ENCODE measurements at regions of chr19 and their contacts with region 1.

Region 1: DNA sequence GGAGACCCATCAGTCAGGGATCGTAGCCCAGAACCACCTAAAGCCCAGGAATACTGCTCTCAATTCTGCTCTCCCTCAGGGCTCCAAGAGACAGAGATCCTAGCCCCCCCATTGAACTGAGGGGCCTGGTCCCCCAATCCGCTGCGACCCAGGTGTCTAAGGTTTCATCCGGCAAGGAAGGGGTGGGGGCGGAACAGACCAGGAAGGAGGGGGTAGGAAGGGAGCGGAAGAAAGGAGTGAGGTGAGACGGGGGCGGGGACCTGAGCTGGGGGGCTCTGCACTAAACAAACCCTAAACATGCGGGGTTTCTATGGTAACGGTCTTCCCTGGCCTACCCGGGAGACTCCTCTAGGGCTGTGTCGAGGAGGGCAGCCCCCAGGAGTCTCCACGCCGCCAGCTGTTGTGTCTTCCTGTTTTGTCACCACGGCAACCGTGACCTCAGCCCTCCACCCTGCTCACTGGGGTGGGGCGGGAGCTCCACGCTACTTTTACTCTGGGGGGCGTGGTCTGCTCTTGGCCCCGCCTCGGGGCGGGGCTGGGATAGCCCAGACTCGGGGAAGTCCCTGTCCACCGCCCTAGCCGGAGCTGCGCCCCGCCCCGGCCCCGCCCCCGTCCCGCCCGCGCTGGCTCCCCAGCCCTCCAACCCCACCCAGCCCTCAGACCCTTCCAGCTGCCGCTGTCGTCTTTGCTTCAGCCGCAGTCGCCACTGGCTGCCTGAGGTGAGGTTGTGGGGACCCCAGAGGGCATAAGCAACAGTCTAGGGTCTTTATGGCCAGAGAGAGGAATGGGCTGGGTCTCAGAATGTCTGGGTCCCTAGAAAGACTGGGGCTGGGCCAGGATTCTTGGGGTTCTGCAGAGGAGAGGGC is at the start of gene MYADM:
- DNase-seq: peak; percentile 100
- H3K4me3 ChIP-seq: peak within 1 kb of the TSS; percentile 85 to 90
- H3K4me3 Mint-ChIP-seq: peak within 1 kb of the TSS; percentile 95 to 99 (median 98)
- H3K27ac ChIP-seq: peak within 1 kb of the TSS; percentile 100
- H3K27ac Mint-ChIP-seq: peak within 1 kb of the TSS; percentile 99 to 100 (median 100)
- H3K4me1 ChIP-seq: peaks cover 30% of the 10 kb centered on the region
- H3K4me1 Mint-ChIP-seq: peaks cover 20 to 60% (median 28%) of the 10 kb centered on the region in 4 donors
- H3K27me3 ChIP-seq: no peaks in the 10 kb centered on the region
- H3K27me3 Mint-ChIP-seq: no peaks in the 10 kb centered on the region
- total RNA-seq, gene MYADM: 42.1 to 45.8 TPM

Region 2: DNA sequence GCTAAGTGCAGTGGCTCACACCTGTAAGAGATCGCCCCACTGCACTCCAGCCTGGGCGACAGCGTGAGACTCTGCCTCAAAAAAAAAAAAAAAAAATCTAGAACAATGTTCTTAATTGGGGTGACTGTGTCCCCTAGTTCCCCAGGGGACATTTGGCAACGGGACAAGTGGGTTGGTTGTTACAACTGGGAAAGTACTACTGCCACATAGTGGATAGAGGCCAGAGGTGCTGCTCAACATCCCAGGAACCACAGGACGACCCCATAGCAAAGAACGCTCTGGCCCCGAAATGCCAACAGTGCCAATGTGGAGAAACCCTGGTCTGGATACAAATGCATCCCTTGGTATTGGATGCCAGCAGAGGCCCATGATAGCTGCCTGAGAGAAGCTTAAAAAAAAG is 55.1 kb before region 1 on chr19:
- CTCF ChIA-PET with region 1: no interaction called
- POLR2A ChIA-PET with region 1: no interaction called
- intact Hi-C with region 1: no loop called
- DNase-seq: no peak
- H3K4me3 ChIP-seq: no peak overlapping the region
- H3K4me3 Mint-ChIP-seq: peak overlapping the region in 1 of 8 donors; percentile 43
- H3K27ac ChIP-seq: no peak overlapping the region
- H3K27ac Mint-ChIP-seq: no peak overlapping the region
- H3K4me1 ChIP-seq: no peaks in the 10 kb centered on the region
- H3K4me1 Mint-ChIP-seq: no peaks in the 10 kb centered on the region
- H3K27me3 ChIP-seq: no peaks in the 10 kb centered on the region
- H3K27me3 Mint-ChIP-seq: no peaks in the 10 kb centered on the region

Region 3: GRCh38 chr19:53849237-53849676 is 18.2 kb before region 1 on chr19:
- CTCF ChIA-PET with region 1: interaction called, 7 read pairs
- POLR2A ChIA-PET with region 1: interaction called, 5 read pairs
- intact Hi-C with region 1: loop called (anchors 1 kb)
- DNase-seq: no peak
- H3K4me3 ChIP-seq: no peak overlapping the region
- H3K4me3 Mint-ChIP-seq: peak overlapping the region in 1 of 8 donors; percentile 23
- H3K27ac ChIP-seq: no peak overlapping the region
- H3K27ac Mint-ChIP-seq: no peak overlapping the region
- H3K4me1 ChIP-seq: peaks cover 7% of the 10 kb centered on the region
- H3K4me1 Mint-ChIP-seq: peaks cover 6 to 12% (median 9%) of the 10 kb centered on the region in 4 donors
- H3K27me3 ChIP-seq: no peaks in the 10 kb centered on the region
- H3K27me3 Mint-ChIP-seq: peaks cover 24% of the 10 kb centered on the region in 2 donors

Region 4: DNA sequence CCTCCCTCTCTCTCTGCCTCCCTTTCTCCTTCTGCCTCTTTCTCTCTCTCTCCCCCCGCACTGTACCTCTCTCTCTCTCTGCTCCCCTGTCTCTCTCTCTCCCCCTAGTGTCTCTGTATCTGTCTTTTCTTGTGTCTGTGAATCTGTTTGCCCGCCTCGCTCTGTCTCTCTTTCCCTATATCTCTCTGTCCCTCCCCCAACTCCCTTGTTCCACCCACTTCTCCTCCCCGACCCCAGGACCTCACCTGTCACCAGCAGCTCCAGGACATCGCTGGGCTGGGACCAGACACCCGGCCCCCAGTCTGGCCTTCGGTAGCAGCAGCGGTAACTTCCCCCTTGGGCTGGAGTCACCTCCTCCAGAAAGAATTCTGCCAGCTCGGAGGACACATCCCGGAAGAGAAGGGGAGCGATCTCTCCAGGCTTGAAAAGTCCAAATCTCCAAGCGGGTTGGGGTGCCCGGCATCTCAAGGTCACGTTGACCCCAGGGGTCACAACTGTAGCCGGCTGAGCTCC is 229.2 kb after region 1 on chr19:
- CTCF ChIA-PET with region 1: no interaction called
- POLR2A ChIA-PET with region 1: interaction called, 3 read pairs
- intact Hi-C with region 1: loop called (anchors 1 kb)
- DNase-seq: peak in 4 of 5 donors; percentile 30 to 50 (median 43)
- H3K4me3 ChIP-seq: no peak overlapping the region
- H3K4me3 Mint-ChIP-seq: peak overlapping the region; percentile 29 to 87 (median 62)
- H3K27ac ChIP-seq: no peak overlapping the region
- H3K27ac Mint-ChIP-seq: peak overlapping the region; percentile 45 to 91 (median 82)
- H3K4me1 ChIP-seq: peaks cover 13% of the 10 kb centered on the region
- H3K4me1 Mint-ChIP-seq: peaks cover 8 to 20% (median 10%) of the 10 kb centered on the region in 4 donors
- H3K27me3 ChIP-seq: no peaks in the 10 kb centered on the region
- H3K27me3 Mint-ChIP-seq: peaks cover 6 to 7% of the 10 kb centered on the region in 2 donors

Region 5: DNA sequence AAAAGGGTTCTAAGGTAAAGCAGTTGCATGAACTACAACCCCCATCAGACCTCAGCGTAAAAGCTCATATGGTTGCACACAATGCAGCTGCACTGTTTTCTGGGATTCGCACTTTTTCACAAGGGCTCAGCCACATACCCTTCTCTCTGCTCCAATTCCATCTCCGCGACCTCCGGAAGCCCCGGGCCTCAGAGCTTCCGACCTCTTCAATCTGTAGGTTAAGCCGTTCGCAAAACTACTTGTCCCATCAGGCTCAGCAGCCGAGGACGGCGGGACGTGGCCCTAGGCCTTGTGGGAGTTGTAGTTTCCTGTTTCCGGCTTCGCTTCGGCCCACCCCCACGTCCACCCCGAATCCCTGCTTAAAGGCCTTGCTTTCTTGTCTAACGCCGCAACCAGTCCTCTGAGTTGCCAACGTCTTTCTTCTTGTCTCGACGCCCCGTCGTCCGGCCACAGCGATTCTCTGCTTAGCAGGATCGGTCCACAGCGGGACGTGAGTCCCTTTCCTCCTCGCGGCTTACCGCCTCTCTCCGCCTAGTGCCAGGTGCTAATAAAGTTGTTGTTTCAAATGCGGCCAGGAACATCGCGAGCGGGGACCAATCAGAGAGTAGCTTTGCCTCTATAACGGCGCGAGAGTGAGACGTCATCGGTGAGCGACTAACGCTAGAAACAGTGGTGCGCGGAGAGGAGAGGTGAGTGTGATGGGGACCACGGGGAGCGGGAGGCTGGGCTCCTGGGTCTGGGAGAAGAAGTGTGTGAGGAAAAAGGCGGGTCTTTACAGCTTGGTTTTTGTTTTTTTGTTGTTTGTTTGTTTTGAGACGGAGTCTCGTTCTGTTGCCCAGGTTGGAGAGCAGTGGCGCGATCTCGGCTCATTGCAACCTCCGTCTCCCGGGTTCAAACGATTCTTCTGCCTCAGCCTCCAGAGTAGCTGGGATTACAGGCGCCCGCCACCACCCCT is 247.9 kb after region 1 on chr19 and contains the starts of genes PRPF31 and TFPT:
- CTCF ChIA-PET with region 1: no interaction called
- POLR2A ChIA-PET with region 1: interaction called, 11 read pairs
- intact Hi-C with region 1: no loop called
- DNase-seq: peak; percentile 97 to 98 (median 97)
- H3K4me3 ChIP-seq: peak within 1 kb of the TSS; percentile 80 to 81
- H3K4me3 Mint-ChIP-seq: peak within 1 kb of the TSS; percentile 86 to 99 (median 95)
- H3K27ac ChIP-seq: peak within 1 kb of the TSS; percentile 75
- H3K27ac Mint-ChIP-seq: peak within 1 kb of the TSS; percentile 91 to 97 (median 95)
- H3K4me1 ChIP-seq: peaks cover 27% of the 10 kb centered on the region
- H3K4me1 Mint-ChIP-seq: peaks cover 22 to 44% (median 28%) of the 10 kb centered on the region in 4 donors
- H3K27me3 ChIP-seq: no peaks in the 10 kb centered on the region
- H3K27me3 Mint-ChIP-seq: peaks cover 0 to 2% of the 10 kb centered on the region in 2 donors
- total RNA-seq, gene PRPF31: 77.6 to 80.0 TPM
- total RNA-seq, gene TFPT: 17.2 to 19.0 TPM

Region 6: DNA sequence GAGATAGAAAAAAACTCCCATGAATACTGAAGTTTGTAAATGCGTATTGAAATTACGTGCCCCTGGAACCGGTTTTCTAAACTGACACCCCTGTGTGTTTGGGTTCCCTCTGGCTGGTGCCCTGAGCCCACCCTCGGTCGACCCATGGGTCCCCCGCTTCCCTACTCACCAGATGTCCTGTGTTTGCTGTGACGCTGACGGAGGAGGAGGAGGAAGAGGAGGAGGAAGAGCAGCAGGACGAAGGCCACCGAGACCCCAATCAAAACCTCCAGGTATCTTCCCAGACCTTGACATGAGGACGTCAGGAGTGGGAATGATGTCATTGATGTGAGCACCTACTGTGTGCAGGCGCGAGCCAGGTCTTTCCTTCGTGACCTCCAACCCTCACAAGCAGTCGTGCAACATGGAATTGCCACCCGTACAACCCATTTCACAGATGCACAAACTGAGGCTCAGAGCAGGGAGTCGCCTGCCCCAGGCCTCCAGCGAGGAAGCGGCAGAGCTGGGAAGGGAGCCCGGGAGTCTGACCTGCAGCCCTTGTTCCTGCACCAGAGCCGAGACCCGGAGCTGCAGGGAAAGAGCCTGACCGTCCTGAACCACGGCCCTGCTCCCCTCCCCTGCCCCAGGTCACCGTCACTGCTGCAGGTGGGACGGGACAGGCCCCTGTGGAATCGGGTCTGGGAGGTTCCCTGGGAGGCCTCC is 351.7 kb after region 1 on chr19:
- CTCF ChIA-PET with region 1: no interaction called
- POLR2A ChIA-PET with region 1: no interaction called
- intact Hi-C with region 1: no loop called
- DNase-seq: no peak
- H3K4me3 ChIP-seq: no peak overlapping the region
- H3K4me3 Mint-ChIP-seq: no peak overlapping the region
- H3K27ac ChIP-seq: no peak overlapping the region
- H3K27ac Mint-ChIP-seq: peak overlapping the region in 2 of 7 donors; percentile 37 to 75
- H3K4me1 ChIP-seq: peaks cover 6% of the 10 kb centered on the region
- H3K4me1 Mint-ChIP-seq: peaks cover 1 to 15% (median 5%) of the 10 kb centered on the region in 4 donors
- H3K27me3 ChIP-seq: no peaks in the 10 kb centered on the region
- H3K27me3 Mint-ChIP-seq: peaks cover 1 to 3% of the 10 kb centered on the region in 2 donors

Region 7: DNA sequence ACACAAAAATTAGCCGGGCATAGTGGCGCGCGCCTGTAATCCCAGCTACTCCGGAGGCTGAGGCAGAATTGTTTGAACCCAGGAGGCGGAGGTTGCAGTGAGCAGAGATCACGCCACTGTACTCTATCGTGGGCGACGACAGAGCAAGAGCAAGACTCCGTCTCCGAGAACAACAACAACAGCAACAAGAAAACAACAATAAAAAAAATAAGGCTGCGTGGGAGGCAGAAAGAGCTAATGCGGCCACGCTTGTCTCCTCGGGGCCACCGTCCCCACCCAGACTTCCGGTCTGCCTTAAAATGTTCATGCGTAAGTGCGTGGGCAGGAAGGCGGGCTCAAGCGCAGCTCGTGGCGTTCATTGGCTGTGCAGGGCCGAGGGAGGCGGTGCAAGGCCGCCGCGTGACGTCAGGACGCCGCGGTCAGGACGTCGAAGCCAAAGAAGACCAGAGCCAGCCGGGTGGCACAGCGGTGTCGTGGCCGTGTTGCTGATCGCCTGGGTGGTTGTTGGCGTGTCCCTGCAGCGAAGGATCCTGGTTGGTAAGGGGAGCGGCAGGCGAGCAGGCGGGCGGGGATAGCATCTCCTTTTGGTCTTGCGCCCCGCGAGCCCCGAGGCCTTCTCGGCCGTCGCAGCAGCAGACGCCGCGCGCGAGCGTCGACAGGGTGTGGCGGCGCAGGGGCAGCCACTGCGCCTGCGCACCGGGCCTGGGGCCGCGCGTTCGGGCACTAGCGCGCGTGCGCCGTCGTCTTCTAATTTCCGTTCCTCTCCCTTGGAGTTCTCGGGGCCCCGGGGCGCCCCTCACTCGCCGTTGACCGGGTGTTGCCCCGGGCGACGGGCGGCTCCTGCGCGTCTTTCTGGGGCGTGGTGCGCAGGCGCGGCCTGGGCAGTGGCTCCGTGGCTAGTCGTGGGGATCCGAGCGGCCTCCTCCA is 581.6 kb after region 1 on chr19 and contains the start of gene LENG8:
- CTCF ChIA-PET with region 1: no interaction called
- POLR2A ChIA-PET with region 1: interaction called, 14 read pairs
- intact Hi-C with region 1: loop called (anchors 5 kb)
- DNase-seq: peak; percentile 98 to 99 (median 99)
- H3K4me3 ChIP-seq: peak within 1 kb of the TSS; percentile 75 to 98
- H3K4me3 Mint-ChIP-seq: peak within 1 kb of the TSS; percentile 91 to 100 (median 98)
- H3K27ac ChIP-seq: peak within 1 kb of the TSS; percentile 93
- H3K27ac Mint-ChIP-seq: peak within 1 kb of the TSS; percentile 96 to 100 (median 99)
- H3K4me1 ChIP-seq: peaks cover 46% of the 10 kb centered on the region
- H3K4me1 Mint-ChIP-seq: peaks cover 25 to 69% (median 41%) of the 10 kb centered on the region in 4 donors
- H3K27me3 ChIP-seq: no peaks in the 10 kb centered on the region
- H3K27me3 Mint-ChIP-seq: peaks cover 0 to 3% of the 10 kb centered on the region in 2 donors
- total RNA-seq, gene LENG8: 535 to 565 TPM